Mammary epithelial cell (primary cell): ENCODE measurements at regions of chr2 and their contacts with region 1.

Region 1: GRCh38 chr2:158903711-158904443 is 64.6 kb upstream of the TANC1 start:
- DNase-seq: no peak
- H3K4me3 ChIP-seq: no peak overlapping the region
- H3K27ac ChIP-seq: no peak overlapping the region
- H3K4me1 ChIP-seq: no peaks in the 10 kb centered on the region
- H3K27me3 ChIP-seq: no peaks in the 10 kb centered on the region
- CTCF ChIP-seq: no peak

Region 2: GRCh38 chr2:158955842-158956365 is 52.0 kb after region 1 on chr2:
- CTCF ChIA-PET with region 1: no interaction called
- dilution Hi-C with region 1: loop called (anchors 5 kb)
- in situ Hi-C with region 1: no loop called
- intact Hi-C with region 1: no loop called
- DNase-seq: no peak
- H3K4me3 ChIP-seq: no peak overlapping the region
- H3K27ac ChIP-seq: no peak overlapping the region
- H3K4me1 ChIP-seq: peaks cover 14% of the 10 kb centered on the region
- H3K27me3 ChIP-seq: no peaks in the 10 kb centered on the region
- CTCF ChIP-seq: no peak

Region 3: GRCh38 chr2:159030674-159031380 is 127.0 kb after region 1 on chr2:
- CTCF ChIA-PET with region 1: no interaction called
- dilution Hi-C with region 1: no loop called
- in situ Hi-C with region 1: no loop called
- intact Hi-C with region 1: loop called (anchors 1 kb)
- DNase-seq: no peak
- H3K4me3 ChIP-seq: no peak overlapping the region
- H3K27ac ChIP-seq: no peak overlapping the region
- H3K4me1 ChIP-seq: peaks cover 15% of the 10 kb centered on the region
- H3K27me3 ChIP-seq: no peaks in the 10 kb centered on the region
- CTCF ChIP-seq: no peak

Region 4: GRCh38 chr2:159118115-159118858 is 214.4 kb after region 1 on chr2:
- CTCF ChIA-PET with region 1: interaction called, 3 read pairs
- dilution Hi-C with region 1: no loop called
- in situ Hi-C with region 1: loop called (anchors 5 to 10 kb)
- intact Hi-C with region 1: loop called (anchors 1 kb)
- DNase-seq: peak; percentile 71
- H3K4me3 ChIP-seq: no peak overlapping the region
- H3K27ac ChIP-seq: no peak overlapping the region
- H3K4me1 ChIP-seq: peaks cover 7% of the 10 kb centered on the region
- H3K27me3 ChIP-seq: no peaks in the 10 kb centered on the region
- CTCF ChIP-seq: peak; percentile 92 to 96

Region 5: DNA sequence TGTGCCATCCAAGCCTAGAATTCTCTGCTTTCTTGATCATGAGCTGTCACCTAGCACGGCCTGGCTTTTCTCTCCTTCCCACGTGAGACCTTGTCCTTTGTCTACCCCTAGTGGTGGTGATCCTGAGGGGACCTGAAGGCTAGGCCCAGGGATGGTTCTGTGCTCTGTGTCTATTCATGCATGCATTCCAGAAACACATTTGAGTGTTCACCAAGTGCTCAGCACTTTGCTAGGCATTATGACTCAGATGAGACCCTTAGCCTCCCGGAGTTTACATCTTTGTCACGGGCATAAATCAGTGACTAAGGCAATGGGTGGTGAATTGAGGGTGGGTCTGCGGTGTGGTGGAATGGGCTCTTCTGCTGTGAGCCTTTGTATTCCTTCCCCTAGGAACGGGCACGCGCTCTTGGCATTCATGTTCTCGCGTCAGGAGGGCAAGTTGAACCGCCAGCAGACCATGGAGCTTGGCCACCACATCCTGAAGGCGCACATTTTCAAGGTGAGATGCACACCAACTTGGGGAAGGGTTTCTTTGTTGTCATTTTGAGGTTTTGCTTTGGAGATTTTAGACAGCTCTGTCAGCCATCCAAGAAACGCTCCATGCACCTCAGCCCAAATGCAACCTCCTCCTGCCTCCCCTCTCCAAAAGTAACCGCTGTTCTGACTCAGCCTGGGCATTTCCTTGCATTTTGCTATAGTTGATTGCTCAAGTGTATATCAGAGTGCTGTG is 281.7 kb after region 1 on chr2:
- CTCF ChIA-PET with region 1: no interaction called
- dilution Hi-C with region 1: no loop called
- in situ Hi-C with region 1: no loop called
- intact Hi-C with region 1: loop called (anchors 1 kb)
- DNase-seq: no peak
- H3K4me3 ChIP-seq: no peak overlapping the region
- H3K27ac ChIP-seq: no peak overlapping the region
- H3K4me1 ChIP-seq: no peaks in the 10 kb centered on the region
- H3K27me3 ChIP-seq: no peaks in the 10 kb centered on the region
- CTCF ChIP-seq: peak; percentile 28 to 42

Region 6: DNA sequence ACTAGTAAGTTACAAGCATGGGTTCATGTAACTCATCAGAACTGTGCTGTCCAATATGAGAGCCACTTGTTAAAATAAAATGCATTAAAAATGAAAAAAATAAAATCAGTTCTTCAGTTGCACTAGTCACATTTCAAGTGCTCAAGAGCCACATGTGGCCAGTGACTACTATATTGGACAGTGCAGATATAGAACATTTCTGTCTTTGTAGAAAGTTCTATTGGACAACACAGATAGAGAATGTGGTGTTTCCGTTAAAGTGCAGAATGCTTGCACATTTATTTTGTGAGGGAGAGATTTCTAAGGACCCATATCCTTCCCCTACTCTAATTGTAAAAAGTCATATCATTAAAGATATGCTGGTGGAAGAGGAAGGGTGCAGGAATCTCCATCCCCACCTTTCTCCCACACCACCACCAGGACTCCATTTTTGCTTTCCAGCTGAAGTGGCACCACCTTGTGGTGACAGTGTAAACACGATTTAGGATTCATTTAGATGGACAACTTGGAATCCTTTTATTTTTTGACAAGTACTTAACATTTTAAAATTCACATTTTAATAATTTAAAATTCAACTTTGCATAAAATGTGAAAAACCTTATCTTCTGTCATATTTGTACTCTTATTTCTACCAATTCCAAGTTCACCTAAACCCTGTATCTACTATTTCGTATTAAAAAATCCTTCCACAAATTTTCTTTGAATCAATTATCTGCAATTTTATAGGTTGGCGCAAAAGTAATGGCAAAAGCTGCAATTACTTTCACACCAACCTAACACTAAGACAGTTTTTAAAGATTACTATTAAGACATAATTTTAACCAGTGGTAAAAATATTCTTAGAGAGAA is 903.5 kb after region 1 on chr2:
- CTCF ChIA-PET with region 1: no interaction called
- dilution Hi-C with region 1: no loop called
- in situ Hi-C with region 1: no loop called
- intact Hi-C with region 1: loop called (anchors 1 kb)
- DNase-seq: peak; percentile 32
- H3K4me3 ChIP-seq: no peak overlapping the region
- H3K27ac ChIP-seq: no peak overlapping the region
- H3K4me1 ChIP-seq: no peaks in the 10 kb centered on the region
- H3K27me3 ChIP-seq: no peaks in the 10 kb centered on the region
- CTCF ChIP-seq: peak; percentile 79